Caco-2 (cell line): ENCODE measurements at regions of chr9 and their contacts with region 1.

Region 1: GRCh38 chr9:89021154-89021803 is 30.0 kb downstream of the S1PR3 start:
- DNase-seq: no peak
- H3K4me3 ChIP-seq: no peak overlapping the region
- H3K4me3 Mint-ChIP-seq: no peak overlapping the region
- H3K27ac Mint-ChIP-seq: no peak overlapping the region
- H3K4me1 ChIP-seq: no peaks in the 10 kb centered on the region
- H3K4me1 Mint-ChIP-seq: no peaks in the 10 kb centered on the region
- H3K27me3 ChIP-seq: no peaks in the 10 kb centered on the region
- H3K27me3 Mint-ChIP-seq: no peaks in the 10 kb centered on the region
- CTCF ChIP-seq: no peak

Region 2: DNA sequence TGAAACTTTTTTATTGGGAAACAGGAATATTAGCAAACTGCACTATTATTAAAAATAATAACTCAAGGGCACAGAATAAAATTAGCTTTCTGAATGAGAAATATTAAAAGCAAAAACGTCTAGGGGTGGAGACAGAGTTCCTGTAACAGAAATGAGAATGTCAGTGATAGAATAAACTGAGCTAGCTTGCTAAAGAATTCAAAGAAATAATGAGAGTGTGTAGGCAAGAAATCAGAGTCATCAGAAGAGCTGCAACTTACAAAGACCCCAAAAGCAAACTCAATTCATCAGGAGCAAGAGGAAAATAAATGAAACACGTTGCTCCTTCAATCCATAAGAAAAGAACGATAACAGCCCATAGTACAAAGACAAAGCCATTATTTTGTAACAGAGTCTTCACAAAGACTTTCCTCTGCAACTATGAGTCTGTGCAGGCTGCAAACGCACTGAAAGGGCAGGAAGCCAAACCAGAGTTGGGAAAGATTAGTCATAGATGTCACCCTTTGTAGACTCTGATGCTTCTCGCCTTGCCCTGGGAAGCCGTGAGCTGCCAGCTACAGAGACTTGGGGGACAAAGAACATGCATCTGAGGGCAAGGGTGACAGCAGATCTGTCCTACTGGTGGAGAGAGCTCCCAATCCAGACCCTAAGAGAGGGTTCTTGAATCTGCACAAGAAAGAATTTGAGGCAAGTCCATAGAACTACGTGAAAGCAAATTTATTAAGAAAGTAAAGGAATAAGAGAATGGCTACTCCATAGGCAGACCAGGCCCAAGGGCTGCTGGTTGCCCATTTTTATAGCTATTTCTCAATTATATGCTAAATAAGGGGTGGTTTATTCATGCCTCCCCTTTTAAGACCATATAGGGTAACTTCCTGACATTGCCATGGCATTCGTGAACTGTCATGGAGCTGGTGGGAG is 116.5 kb after region 1 on chr9:
- CTCF ChIA-PET with region 1: no interaction called
- POLR2A ChIA-PET with region 1: no interaction called
- intact Hi-C with region 1: loop called (anchors 5 kb)
- DNase-seq: no peak
- H3K4me3 ChIP-seq: no peak overlapping the region
- H3K4me3 Mint-ChIP-seq: no peak overlapping the region
- H3K27ac Mint-ChIP-seq: no peak overlapping the region
- H3K4me1 ChIP-seq: peaks cover 32% of the 10 kb centered on the region
- H3K4me1 Mint-ChIP-seq: no peaks in the 10 kb centered on the region
- H3K27me3 ChIP-seq: no peaks in the 10 kb centered on the region
- H3K27me3 Mint-ChIP-seq: no peaks in the 10 kb centered on the region
- CTCF ChIP-seq: no peak